PC-3 (cell line): ENCODE measurements at regions of chr4 and their contacts with region 1.

Region 1: DNA sequence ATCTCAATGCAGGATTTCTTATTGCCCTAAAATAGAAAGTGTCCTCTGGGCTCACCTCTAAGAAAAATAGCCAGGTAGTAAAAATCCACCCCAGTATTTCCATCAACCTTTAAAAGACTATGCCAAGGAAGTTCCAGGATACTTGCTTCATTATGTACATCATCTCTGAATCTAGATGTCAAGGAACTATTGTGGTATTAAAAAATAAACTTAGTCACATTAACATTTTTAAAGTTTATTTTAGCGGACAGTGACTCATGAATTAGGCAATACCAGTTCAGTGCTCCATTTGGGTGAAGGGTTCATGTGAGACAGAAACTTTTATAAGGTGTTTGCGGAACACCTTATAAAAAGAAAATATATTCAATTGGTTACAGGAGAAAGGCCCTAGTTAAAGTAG is 209.2 kb downstream of the ADAM29 start:
- DNase-seq: peak; percentile 88
- ATAC-seq: peak; percentile 66
- H3K4me3 ChIP-seq: no peak overlapping the region
- H3K27ac ChIP-seq: peak overlapping the region; percentile 88
- H3K4me1 ChIP-seq: peaks cover 39% of the 10 kb centered on the region
- H3K27me3 ChIP-seq: no peaks in the 10 kb centered on the region
- CTCF ChIP-seq: no peak

Region 2: GRCh38 chr4:174631901-174632758 is 495.2 kb before region 1 on chr4:
- CTCF ChIA-PET with region 1: no interaction called
- POLR2A ChIA-PET with region 1: no interaction called
- intact Hi-C with region 1: loop called (anchors 10 kb)
- DNase-seq: peak; percentile 50
- ATAC-seq: peak; percentile 39
- H3K4me3 ChIP-seq: no peak overlapping the region
- H3K27ac ChIP-seq: 0 out of 2 replicates have a peak overlapping the region, but pooled peaks have one; percentile 12
- H3K4me1 ChIP-seq: peaks cover 45% of the 10 kb centered on the region
- H3K27me3 ChIP-seq: no peaks in the 10 kb centered on the region
- CTCF ChIP-seq: peak; percentile 88

Region 3: GRCh38 chr4:174873931-174874330 is 253.4 kb before region 1 on chr4:
- CTCF ChIA-PET with region 1: interaction called, 9 read pairs
- POLR2A ChIA-PET with region 1: interaction called, 3 read pairs
- intact Hi-C with region 1: loop called (anchors 1 kb)
- DNase-seq: peak; percentile 63
- ATAC-seq: no peak
- H3K4me3 ChIP-seq: no peak overlapping the region
- H3K27ac ChIP-seq: no peak overlapping the region
- H3K4me1 ChIP-seq: peaks cover 16% of the 10 kb centered on the region
- H3K27me3 ChIP-seq: no peaks in the 10 kb centered on the region
- CTCF ChIP-seq: peak; percentile 56

Region 4: DNA sequence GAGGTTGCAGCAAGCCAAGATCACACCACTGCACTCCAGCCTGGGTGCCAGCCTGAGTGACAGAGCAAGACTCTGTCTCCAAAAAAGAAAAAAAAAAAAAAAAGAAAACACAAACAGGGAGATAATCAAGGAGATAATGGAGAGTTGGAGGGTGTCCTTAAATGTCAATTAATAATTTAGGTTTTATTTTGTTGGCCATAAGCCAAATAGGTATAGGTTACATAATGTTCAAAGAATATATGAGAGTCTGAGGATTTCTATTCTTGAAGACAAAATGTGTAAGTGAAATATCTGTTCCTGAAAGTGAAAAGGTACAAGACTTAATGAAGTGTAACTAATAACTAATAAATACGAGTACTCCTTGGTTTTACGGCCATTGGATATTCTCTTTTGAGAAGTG is 239.6 kb before region 1 on chr4:
- CTCF ChIA-PET with region 1: no interaction called
- POLR2A ChIA-PET with region 1: no interaction called
- intact Hi-C with region 1: no loop called
- DNase-seq: no peak
- ATAC-seq: no peak
- H3K4me3 ChIP-seq: no peak overlapping the region
- H3K27ac ChIP-seq: no peak overlapping the region
- H3K4me1 ChIP-seq: no peaks in the 10 kb centered on the region
- H3K27me3 ChIP-seq: no peaks in the 10 kb centered on the region
- CTCF ChIP-seq: no peak

Region 5: GRCh38 chr4:175087146-175087545 is 40.2 kb before region 1 on chr4:
- CTCF ChIA-PET with region 1: no interaction called
- POLR2A ChIA-PET with region 1: no interaction called
- intact Hi-C with region 1: no loop called
- DNase-seq: no peak
- ATAC-seq: no peak
- H3K4me3 ChIP-seq: no peak overlapping the region
- H3K27ac ChIP-seq: no peak overlapping the region
- H3K4me1 ChIP-seq: no peaks in the 10 kb centered on the region
- H3K27me3 ChIP-seq: no peaks in the 10 kb centered on the region
- CTCF ChIP-seq: no peak

Region 6: DNA sequence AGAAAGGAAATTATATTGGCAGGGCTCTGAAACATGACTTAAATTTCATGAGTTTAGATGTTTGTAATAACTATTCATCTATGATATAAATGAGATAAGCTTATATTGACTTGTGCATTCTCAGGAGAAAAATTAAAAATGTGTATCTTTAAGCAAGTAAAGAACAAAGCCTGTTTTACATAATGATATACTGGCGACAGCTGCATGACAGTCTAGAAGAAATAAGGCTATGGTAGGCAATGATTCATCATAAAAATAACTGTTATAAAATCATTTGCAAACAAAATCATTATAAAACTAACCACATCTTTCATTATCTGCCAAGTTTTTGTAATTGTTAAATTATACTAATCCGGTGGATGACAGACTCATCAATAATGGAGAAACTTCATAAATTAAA is 21.0 kb before region 1 on chr4:
- CTCF ChIA-PET with region 1: no interaction called
- POLR2A ChIA-PET with region 1: no interaction called
- intact Hi-C with region 1: loop called (anchors 2 kb)
- DNase-seq: peak; percentile 9
- ATAC-seq: peak; percentile 90
- H3K4me3 ChIP-seq: no peak overlapping the region
- H3K27ac ChIP-seq: no peak overlapping the region
- H3K4me1 ChIP-seq: peaks cover 4% of the 10 kb centered on the region; the same call in 1 of the 2 replicates
- H3K27me3 ChIP-seq: no peaks in the 10 kb centered on the region
- CTCF ChIP-seq: no peak

Region 7: DNA sequence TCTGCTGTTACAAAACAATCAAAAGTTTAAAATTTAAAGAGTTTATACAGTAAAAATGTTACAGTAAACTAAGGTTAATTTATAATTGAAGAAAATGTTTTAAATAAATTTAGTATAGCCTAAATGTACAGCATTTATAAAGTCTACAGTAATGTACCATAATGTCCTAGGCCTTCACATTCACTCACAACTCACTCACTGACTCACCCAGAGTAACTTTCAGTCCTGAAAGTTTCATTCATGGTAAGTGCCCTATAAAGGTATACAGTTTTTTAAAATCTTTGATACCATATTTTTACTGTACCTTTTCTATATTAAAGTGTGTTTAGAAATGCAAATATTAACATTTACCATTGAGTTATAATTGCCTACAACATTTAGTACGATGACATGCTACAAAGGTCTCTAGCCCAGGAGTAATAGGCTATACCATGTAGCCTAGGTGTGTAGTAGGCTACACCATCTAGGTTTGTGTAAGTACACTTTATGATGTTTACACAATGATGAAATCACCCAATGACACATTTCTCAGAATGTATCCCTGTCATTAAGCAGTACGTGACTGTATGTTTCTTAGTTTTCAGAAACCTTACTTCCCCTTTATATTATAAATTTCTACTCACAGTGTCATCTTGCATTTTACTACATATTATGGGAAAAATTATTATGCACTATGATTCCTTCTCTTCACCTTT is 111.7 kb after region 1 on chr4:
- CTCF ChIA-PET with region 1: no interaction called
- POLR2A ChIA-PET with region 1: no interaction called
- intact Hi-C with region 1: loop called (anchors 5 kb)
- DNase-seq: peak; percentile 88
- ATAC-seq: peak; percentile 99
- H3K4me3 ChIP-seq: no peak overlapping the region
- H3K27ac ChIP-seq: peak overlapping the region; percentile 69
- H3K4me1 ChIP-seq: peaks cover 7% of the 10 kb centered on the region; the same call in 1 of the 2 replicates
- H3K27me3 ChIP-seq: no peaks in the 10 kb centered on the region
- CTCF ChIP-seq: no peak

Region 8: GRCh38 chr4:175419239-175419767 is 292.0 kb after region 1 on chr4:
- CTCF ChIA-PET with region 1: no interaction called
- POLR2A ChIA-PET with region 1: no interaction called
- intact Hi-C with region 1: loop called (anchors 5 kb)
- DNase-seq: peak; percentile 90
- ATAC-seq: peak; percentile 80
- H3K4me3 ChIP-seq: peak overlapping the region; percentile 28; the same call in 1 of the 2 replicates
- H3K27ac ChIP-seq: peak overlapping the region; percentile 99
- H3K4me1 ChIP-seq: peaks cover 42% of the 10 kb centered on the region
- H3K27me3 ChIP-seq: no peaks in the 10 kb centered on the region
- CTCF ChIP-seq: no peak